ENCODE measurements at regions of chr13 and their contacts with region 1.

Region 1: DNA sequence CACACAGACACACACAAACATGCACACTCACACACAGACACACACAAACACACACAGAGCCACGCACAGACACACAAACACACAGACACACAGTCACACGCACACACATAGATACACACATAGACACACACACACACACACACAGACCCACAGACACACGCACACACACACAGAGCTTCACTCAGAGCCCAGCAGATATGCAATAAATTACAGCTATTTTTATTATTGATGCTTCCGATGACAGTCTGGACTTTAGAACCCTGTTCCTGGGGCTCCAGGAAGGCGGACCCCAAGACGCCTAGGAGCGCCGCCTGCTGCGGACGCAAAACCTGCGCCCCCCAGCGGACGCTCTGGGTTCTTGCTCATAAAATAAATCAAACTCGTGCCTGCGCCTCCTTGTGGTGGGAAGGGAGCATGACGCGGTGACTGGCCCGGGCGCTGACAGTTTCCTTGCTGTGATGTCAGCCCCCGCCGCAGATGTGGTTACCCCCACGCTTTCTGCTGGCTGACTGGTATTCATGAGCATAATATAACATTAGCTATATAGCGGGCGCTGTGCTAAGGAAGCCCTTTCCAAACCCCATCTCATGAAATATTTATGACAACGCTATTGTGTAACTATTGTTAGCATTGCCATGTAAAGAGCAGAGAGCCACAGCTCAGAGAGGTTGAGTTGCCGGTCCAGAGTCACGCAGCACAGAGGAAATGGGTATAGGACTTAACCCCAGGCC is 64.4 kb upstream of the TM9SF2 start:
- DNase-seq: peak; percentile 42 to 81
- ATAC-seq: peak; percentile 72 to 78
- H3K4me3 ChIP-seq: peak overlapping the region; percentile 32; the same call in 1 of the 3 replicates
- H3K27ac ChIP-seq: peak overlapping the region in 1 of 2 experiments; percentile 63; a peak in 1 of 6 replicates
- H3K4me1 ChIP-seq: peaks cover 12% of the 10 kb centered on the region; the same call in 2 of the 3 replicates
- CTCF ChIP-seq: peak; percentile 99
- EP300 ChIP-seq: no peak
- POLR2A ChIP-seq: no peak
- RAD21 ChIP-seq: peak; percentile 71 to 81

Region 2: DNA sequence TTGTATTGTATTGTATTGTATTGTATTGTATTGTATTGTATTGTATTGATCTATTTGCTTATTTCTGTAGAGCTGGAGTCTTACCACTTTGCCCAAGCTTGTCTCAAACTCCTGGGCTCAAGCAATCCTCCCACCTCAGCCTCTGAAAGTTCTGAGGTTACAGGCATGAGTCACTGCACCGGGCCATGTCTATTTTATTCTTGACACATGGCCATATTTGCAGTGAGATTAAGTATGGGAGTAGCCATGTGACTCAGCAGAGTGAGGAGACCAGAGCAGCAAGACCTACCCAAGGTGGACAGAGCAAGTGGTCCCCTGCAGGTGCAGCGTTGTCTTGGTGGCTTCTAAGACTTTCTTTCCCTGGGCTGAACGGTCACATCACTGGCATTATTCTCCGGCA is 285.3 kb before region 1 on chr13:
- CTCF ChIA-PET with region 1: no interaction called
- POLR2A ChIA-PET with region 1: no interaction called
- DNase-seq: peak; percentile 50 to 70
- ATAC-seq: peak; percentile 87 to 91
- H3K4me3 ChIP-seq: no peak overlapping the region
- H3K27ac ChIP-seq: peak overlapping the region; percentile 79 to 89
- H3K4me1 ChIP-seq: peaks cover 40% of the 10 kb centered on the region
- CTCF ChIP-seq: no peak
- EP300 ChIP-seq: no peak
- POLR2A ChIP-seq: no peak
- RAD21 ChIP-seq: no peak

Region 3: DNA sequence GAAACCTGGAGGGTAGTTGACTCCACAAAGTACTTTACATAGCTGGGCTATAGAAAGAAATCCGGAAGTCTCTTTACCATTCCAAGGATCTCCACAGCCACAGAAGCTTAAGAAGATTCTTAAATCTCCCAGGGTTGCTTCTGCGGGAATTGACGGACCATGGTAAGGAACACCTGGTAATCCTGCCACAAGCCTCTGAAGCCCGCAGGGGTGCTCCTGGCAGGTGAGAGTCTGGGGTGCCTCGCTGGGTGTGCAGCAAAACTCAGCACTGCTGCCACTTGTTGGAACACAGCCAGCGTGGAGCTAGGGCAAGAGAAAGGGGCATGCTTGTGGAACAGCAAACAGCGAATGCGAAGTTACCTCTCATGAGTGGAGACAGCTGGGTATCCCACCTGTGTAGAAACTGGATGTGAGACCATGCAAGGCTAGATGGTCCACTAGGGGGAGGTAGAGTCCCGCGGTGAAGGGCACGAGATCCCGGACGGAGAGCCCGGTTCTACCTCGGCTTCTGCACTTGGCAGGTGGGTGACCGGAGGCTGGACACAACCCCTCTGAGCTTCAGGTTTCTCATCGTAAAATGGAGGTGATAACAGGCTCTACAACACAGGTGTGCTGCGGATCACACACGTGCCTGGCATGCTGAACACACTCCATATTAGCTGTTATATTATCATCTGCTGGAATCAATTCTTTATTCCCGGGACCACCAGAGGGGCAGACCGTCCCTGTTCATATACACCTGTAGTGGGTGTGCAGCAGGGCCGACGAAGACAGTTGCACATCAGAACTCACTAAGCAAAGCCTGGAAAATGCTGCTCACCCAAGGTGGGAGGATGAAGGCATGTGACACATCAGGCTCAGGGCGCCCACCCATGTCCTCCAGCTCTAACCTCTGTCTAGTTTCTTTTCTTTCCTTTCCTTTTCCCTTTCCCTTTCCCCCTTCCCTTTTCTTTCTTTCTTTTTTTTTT is 260.3 kb before region 1 on chr13:
- CTCF ChIA-PET with region 1: interaction called, 36 read pairs
- POLR2A ChIA-PET with region 1: no interaction called
- DNase-seq: peak; percentile 57 to 59
- ATAC-seq: peak; percentile 95 to 98
- H3K4me3 ChIP-seq: no peak overlapping the region
- H3K27ac ChIP-seq: peak overlapping the region in 1 of 2 experiments; percentile 50; a peak in 2 of 6 replicates
- H3K4me1 ChIP-seq: no peaks in the 10 kb centered on the region
- CTCF ChIP-seq: peak; percentile 77
- EP300 ChIP-seq: no peak
- POLR2A ChIP-seq: no peak
- RAD21 ChIP-seq: peak; percentile 81 to 83

Region 4: GRCh38 chr13:99269627-99270241 is 167.1 kb before region 1 on chr13:
- CTCF ChIA-PET with region 1: interaction called, 106 read pairs
- POLR2A ChIA-PET with region 1: no interaction called
- DNase-seq: peak in 1 of 2 experiments; percentile 45
- ATAC-seq: peak in 1 of 2 experiments; percentile 83; a peak in 4 of 6 replicates
- H3K4me3 ChIP-seq: no peak overlapping the region
- H3K27ac ChIP-seq: no peak overlapping the region
- H3K4me1 ChIP-seq: no peaks in the 10 kb centered on the region
- CTCF ChIP-seq: peak; percentile 66
- EP300 ChIP-seq: no peak
- POLR2A ChIP-seq: no peak
- RAD21 ChIP-seq: peak; percentile 54 to 58; a peak in 4 of 5 replicates

Region 5: DNA sequence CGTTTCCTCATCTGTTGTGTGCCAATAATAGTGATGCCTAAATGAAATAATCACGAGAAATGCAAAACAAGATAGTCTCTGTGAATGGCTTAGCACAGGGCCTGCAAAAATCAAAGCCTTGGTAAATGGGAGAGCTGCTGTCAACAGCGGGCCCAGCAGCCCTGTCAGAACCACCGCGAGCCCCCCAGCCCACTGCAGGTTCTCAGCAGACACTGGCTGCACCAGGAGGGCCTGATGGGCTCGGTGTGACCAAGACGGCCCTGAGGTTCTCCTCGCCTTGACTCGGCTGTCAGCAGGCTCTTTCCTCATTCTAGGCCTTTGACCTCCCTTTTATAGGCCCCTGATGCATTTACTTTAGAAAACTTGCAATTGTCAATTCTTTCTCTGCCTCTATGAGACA is 38.8 kb before region 1 on chr13:
- CTCF ChIA-PET with region 1: interaction called, 10 read pairs
- POLR2A ChIA-PET with region 1: no interaction called
- DNase-seq: no peak
- ATAC-seq: no peak
- H3K4me3 ChIP-seq: no peak overlapping the region
- H3K27ac ChIP-seq: no peak overlapping the region
- H3K4me1 ChIP-seq: no peaks in the 10 kb centered on the region
- CTCF ChIP-seq: no peak
- EP300 ChIP-seq: no peak
- POLR2A ChIP-seq: no peak
- RAD21 ChIP-seq: no peak

Region 6: DNA sequence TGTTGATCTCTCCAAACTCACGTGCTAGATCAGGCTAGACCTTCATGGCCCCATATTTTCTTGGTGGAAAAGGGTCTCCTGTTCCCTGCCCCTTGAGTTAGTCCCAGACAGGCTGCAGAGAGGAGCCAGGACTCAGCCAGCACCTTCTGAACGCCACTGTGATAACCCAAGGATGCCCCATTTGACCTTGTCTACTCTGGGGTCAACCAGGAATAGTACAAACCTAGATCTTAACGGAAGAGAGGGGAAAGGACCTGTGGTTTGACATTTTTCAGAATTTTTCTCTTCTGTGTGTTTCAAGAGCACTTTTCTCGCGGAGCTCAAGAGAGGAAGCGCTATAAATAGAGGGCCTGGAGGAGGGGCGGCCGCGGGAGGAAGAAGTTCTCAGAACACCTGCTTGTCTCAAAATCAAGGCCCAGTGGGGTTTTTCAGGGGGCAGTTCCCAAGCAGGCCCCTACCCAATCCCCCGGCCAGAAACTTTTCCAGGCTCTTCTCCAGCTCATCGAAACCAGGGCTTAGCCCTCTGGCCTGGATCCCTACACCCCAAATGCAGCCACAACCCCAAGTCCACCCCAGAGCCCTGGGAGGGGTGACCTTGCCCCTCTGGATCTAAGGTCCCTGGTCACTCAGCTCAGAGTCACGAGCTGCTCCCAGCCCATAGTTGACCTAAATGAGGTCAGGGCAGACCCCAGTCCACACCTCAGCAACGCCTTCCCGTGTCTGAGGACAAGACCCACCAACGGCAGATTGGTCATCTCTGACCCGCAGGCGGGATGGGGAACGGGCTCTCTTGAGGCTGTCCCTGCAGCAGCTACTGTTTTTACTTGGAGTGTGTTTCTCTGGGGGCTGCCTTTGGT is 11.1 kb before region 1 on chr13:
- CTCF ChIA-PET with region 1: interaction called, 10 read pairs
- POLR2A ChIA-PET with region 1: no interaction called
- DNase-seq: no peak
- ATAC-seq: no peak
- H3K4me3 ChIP-seq: no peak overlapping the region
- H3K27ac ChIP-seq: no peak overlapping the region
- H3K4me1 ChIP-seq: no peaks in the 10 kb centered on the region
- CTCF ChIP-seq: no peak
- EP300 ChIP-seq: no peak
- POLR2A ChIP-seq: no peak
- RAD21 ChIP-seq: no peak

Region 7: GRCh38 chr13:99606324-99607066 is 169.6 kb after region 1 on chr13:
- CTCF ChIA-PET with region 1: no interaction called
- POLR2A ChIA-PET with region 1: no interaction called
- DNase-seq: peak; percentile 50 to 83
- ATAC-seq: peak; percentile 90 to 95
- H3K4me3 ChIP-seq: peak within 1 kb of the TSS; percentile 74
- H3K27ac ChIP-seq: peak within 1 kb of the TSS; percentile 91 to 94
- H3K4me1 ChIP-seq: peaks cover 14% of the 10 kb centered on the region
- CTCF ChIP-seq: no peak; the same call in 2 of the 3 replicates
- EP300 ChIP-seq: no peak
- POLR2A ChIP-seq: peak; percentile 87
- RAD21 ChIP-seq: no peak

Measured in A549 (cell line).